ENCODE measurements at regions of chr4 and their contacts with region 1.

Region 1: GRCh38 chr4:165327211-165328100 is at the start of gene MSMO1:
- DNase-seq: peak; percentile 99
- H3K4me3 Mint-ChIP-seq: no peak within 1 kb of the TSS
- H3K27ac Mint-ChIP-seq: no peak within 1 kb of the TSS
- H3K4me1 Mint-ChIP-seq: peaks cover 42% of the 10 kb centered on the region
- H3K27me3 Mint-ChIP-seq: no peaks in the 10 kb centered on the region
- total RNA-seq, gene MSMO1: 61.2 to 72.1 TPM

Region 2: DNA sequence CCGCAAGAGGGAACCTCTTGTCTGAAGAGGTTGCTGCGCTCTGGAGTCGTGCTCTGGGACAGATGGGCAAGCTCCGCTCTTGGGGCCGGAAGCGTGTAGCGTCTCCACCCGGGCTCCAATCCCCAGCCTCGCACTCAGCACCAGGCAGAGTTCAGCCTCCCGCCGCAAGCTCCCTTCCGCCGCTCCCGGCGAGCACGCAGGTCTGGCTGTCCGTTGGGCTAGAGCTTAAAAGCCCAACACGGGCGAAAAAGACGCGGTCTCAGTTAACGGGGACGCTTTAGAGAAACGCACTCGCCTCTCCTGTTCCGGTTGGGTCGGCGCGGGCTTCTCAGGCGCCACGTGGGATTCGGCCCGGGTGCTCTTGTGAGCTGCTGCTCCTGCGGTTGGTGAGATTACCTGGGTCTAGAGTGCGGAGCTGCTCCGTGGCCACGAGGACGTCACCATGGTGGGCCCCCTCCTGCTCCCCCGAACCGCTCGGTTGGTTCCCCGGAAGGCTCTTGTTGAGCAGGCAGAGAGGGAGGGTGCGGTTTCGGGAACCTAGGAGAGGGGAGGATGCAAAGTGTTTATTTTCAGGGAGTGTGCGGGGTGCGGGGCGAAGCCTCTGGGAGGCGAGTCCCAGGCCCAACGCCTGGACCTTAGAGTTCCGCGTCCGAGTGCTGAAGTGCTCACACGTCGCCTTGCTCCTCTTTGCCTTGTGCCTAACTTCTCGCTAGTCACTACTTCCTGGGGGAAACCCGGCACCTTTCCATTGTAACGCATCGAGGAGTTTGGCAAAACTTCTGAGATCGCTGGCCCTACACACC is 1832.9 kb before region 1 on chr4 and contains the start of gene TMA16:
- CTCF ChIA-PET with region 1: no interaction called
- intact Hi-C with region 1: loop called (anchors 2 kb)
- DNase-seq: peak; percentile 88
- H3K4me3 Mint-ChIP-seq: peak within 1 kb of the TSS; percentile 83
- H3K27ac Mint-ChIP-seq: peak within 1 kb of the TSS; percentile 99
- H3K4me1 Mint-ChIP-seq: peaks cover 26% of the 10 kb centered on the region
- H3K27me3 Mint-ChIP-seq: no peaks in the 10 kb centered on the region
- total RNA-seq, gene TMA16: 45.1 to 46.7 TPM

Region 3: GRCh38 chr4:164779811-164780216 is 547.6 kb before region 1 on chr4:
- CTCF ChIA-PET with region 1: no interaction called
- intact Hi-C with region 1: no loop called
- DNase-seq: peak; percentile 51
- H3K4me3 Mint-ChIP-seq: no peak overlapping the region
- H3K27ac Mint-ChIP-seq: no peak overlapping the region
- H3K4me1 Mint-ChIP-seq: no peaks in the 10 kb centered on the region
- H3K27me3 Mint-ChIP-seq: no peaks in the 10 kb centered on the region

Region 4: DNA sequence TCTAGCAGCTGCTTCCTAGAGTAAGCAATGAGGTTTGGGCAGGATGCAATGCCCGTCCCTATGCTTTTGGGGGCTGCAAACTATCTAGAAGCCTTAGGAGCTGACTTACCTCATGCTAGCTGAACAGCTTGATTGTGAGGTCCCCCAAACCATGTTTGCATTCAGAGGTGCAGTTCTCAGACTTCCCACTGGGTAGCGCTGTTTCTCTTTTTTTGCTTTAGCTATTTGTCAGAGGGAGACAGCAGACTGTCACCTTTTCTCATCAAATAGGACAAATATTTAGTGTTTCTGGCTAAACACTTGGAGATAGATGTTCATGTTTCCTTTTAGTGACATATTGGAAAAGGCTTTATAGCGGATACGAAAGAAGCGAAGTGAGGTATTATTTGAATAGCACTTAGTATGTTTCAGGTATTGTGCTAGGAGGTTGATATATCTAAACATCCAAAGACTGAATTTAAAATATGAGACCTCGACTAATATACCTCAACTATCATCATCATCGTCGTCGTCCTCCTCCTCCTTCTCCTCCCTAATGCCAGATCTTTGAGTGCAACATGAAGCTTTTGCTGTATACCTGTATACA is 196.1 kb before region 1 on chr4:
- CTCF ChIA-PET with region 1: interaction called, 5 read pairs
- intact Hi-C with region 1: loop called (anchors 1 kb)
- DNase-seq: peak; percentile 91
- H3K4me3 Mint-ChIP-seq: no peak overlapping the region
- H3K27ac Mint-ChIP-seq: no peak overlapping the region
- H3K4me1 Mint-ChIP-seq: peaks cover 2% of the 10 kb centered on the region
- H3K27me3 Mint-ChIP-seq: no peaks in the 10 kb centered on the region

Region 5: GRCh38 chr4:165207431-165208220 is 119.8 kb before region 1 on chr4 and contains the start of gene KLHL2:
- CTCF ChIA-PET with region 1: no interaction called
- intact Hi-C with region 1: loop called (anchors 1 kb)
- DNase-seq: peak; percentile 69
- H3K4me3 Mint-ChIP-seq: peak within 1 kb of the TSS; percentile 83
- H3K27ac Mint-ChIP-seq: peak within 1 kb of the TSS; percentile 92
- H3K4me1 Mint-ChIP-seq: peaks cover 71% of the 10 kb centered on the region
- H3K27me3 Mint-ChIP-seq: no peaks in the 10 kb centered on the region
- total RNA-seq, gene KLHL2: 36.8 to 39.2 TPM

Region 6: DNA sequence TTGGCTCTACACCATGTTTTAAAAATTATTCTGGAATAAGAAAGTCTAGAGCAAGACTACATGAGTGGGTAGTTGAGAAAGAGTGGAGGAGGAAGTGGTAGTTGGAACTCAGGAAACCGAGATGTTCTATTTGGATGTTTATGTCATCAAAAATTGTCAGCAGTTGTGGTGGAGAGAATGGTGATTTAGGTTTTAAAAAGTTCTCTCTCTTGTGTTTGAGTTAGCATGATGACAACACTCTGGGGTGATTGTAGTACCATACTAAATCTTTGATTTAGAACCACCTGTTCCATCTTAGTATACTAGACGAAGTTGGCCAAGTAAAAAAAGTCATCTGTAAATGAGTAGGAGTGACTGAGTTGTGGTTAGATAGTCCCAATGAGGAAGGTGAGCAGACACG is 79.4 kb before region 1 on chr4:
- CTCF ChIA-PET with region 1: no interaction called
- intact Hi-C with region 1: loop called (anchors 2 kb)
- DNase-seq: no peak
- H3K4me3 Mint-ChIP-seq: no peak overlapping the region
- H3K27ac Mint-ChIP-seq: no peak overlapping the region
- H3K4me1 Mint-ChIP-seq: peaks cover 4% of the 10 kb centered on the region
- H3K27me3 Mint-ChIP-seq: no peaks in the 10 kb centered on the region

Region 7: GRCh38 chr4:165301833-165302232 is 25.6 kb before region 1 on chr4:
- CTCF ChIA-PET with region 1: no interaction called
- intact Hi-C with region 1: loop called (anchors 1 kb)
- DNase-seq: peak; percentile 18
- H3K4me3 Mint-ChIP-seq: peak overlapping the region; percentile 71
- H3K27ac Mint-ChIP-seq: peak overlapping the region; percentile 85
- H3K4me1 Mint-ChIP-seq: peaks cover 22% of the 10 kb centered on the region
- H3K27me3 Mint-ChIP-seq: no peaks in the 10 kb centered on the region